ENCODE measurements at regions of chr15 and their contacts with region 1.

Region 1: GRCh38 chr15:85504749-85505676 is 124.6 kb downstream of the AKAP13 start:
- DNase-seq: peak; percentile 74
- ATAC-seq: peak; percentile 89
- H3K4me3 ChIP-seq: no peak overlapping the region
- H3K27ac ChIP-seq: no peak overlapping the region
- H3K4me1 ChIP-seq: peaks cover 5% of the 10 kb centered on the region
- H3K27me3 ChIP-seq: no peaks in the 10 kb centered on the region
- CTCF ChIP-seq: peak; percentile 65
- POLR2A ChIP-seq: no peak
- RAD21 ChIP-seq: peak; percentile 59

Region 2: DNA sequence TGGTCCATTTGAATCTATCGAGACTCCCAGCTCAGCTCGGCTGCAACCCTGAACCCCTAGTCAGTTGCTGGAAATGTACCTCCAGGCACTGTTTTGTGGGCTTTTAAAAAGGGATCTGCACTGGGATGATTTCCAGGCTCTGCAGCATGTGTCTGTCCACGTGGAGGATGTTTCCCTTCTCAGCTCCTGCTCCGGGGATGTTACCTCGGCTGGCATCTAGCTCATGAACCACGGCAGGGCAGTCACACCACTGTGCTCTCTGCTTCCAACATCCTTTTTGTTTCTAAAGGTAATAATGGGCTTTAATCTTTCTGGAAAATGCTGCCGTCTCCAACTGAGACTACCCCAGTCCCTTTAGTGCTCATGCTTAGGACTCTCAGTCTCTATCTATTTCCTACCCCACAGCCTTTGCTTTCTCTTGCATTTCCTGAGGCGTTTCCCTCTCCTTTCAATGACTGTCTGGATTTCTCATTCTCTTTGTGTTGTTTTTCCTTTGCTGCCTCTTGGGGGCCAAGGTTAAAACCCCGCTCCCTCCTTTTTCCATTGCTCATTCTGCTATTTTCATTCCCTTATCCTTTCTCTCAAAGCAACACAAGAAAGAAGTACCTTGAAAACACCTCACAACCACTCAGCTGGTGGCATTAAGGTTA is 167.5 kb before region 1 on chr15:
- CTCF ChIA-PET with region 1: no interaction called
- POLR2A ChIA-PET with region 1: no interaction called
- dilution Hi-C with region 1: no loop called
- in situ Hi-C with region 1: no loop called
- intact Hi-C with region 1: no loop called
- DNase-seq: no peak
- ATAC-seq: no peak
- H3K4me3 ChIP-seq: no peak overlapping the region
- H3K27ac ChIP-seq: no peak overlapping the region
- H3K4me1 ChIP-seq: peaks cover 10% of the 10 kb centered on the region
- H3K27me3 ChIP-seq: no peaks in the 10 kb centered on the region
- CTCF ChIP-seq: no peak
- POLR2A ChIP-seq: no peak
- RAD21 ChIP-seq: no peak

Region 3: GRCh38 chr15:85494048-85494793 is 10.8 kb before region 1 on chr15:
- CTCF ChIA-PET with region 1: interaction called, 10 read pairs
- POLR2A ChIA-PET with region 1: no interaction called
- dilution Hi-C with region 1: no loop called
- in situ Hi-C with region 1: no loop called
- intact Hi-C with region 1: no loop called
- DNase-seq: peak; percentile 95
- ATAC-seq: peak; percentile 96
- H3K4me3 ChIP-seq: no peak overlapping the region
- H3K27ac ChIP-seq: no peak overlapping the region; the same call in 1 of the 2 replicates
- H3K4me1 ChIP-seq: peaks cover 4% of the 10 kb centered on the region; the same call in 1 of the 2 replicates
- H3K27me3 ChIP-seq: no peaks in the 10 kb centered on the region
- CTCF ChIP-seq: no peak
- POLR2A ChIP-seq: no peak
- RAD21 ChIP-seq: no peak; the same call in 1 of the 2 replicates